B cell (primary cell): ENCODE measurements at regions of chr21 and their contacts with region 1.

Region 1: DNA sequence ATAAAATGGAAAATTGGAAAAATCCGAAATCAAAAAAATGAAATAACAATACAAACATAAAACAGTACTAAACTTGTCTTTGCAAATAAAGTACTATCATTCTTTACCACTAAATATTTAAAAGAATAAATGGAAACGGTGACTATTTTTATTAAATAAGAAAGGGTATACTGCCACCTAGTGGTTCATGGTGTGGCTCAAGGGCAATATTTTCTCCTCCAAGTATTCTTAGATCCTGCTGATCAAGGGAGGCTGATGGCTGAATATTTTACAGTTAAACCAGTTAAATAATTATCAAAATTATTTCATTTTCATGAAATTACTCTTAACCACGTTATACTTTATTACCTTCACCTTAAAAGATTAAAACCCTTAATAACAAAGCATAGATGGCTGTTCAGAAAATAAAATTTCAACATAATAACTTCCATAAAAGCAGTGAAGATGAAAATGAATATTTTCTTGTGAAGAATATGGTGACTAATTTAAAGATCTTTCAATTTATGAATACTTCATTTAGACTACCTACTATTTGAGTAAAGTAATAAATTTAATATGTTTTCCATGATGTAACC is 1793.9 kb downstream of the NCAM2 start:
- DNase-seq: peak; percentile 40
- ATAC-seq: no peak
- H3K4me3 ChIP-seq: no peak overlapping the region
- H3K4me3 Mint-ChIP-seq: no peak overlapping the region
- H3K27ac ChIP-seq: no peak overlapping the region
- H3K27ac Mint-ChIP-seq: no peak overlapping the region
- H3K4me1 ChIP-seq: no peaks in the 10 kb centered on the region
- H3K4me1 Mint-ChIP-seq: no peaks in the 10 kb centered on the region
- H3K27me3 ChIP-seq: no peaks in the 10 kb centered on the region
- H3K27me3 Mint-ChIP-seq: no peaks in the 10 kb centered on the region
- CTCF ChIP-seq: peak; percentile 93

Region 2: DNA sequence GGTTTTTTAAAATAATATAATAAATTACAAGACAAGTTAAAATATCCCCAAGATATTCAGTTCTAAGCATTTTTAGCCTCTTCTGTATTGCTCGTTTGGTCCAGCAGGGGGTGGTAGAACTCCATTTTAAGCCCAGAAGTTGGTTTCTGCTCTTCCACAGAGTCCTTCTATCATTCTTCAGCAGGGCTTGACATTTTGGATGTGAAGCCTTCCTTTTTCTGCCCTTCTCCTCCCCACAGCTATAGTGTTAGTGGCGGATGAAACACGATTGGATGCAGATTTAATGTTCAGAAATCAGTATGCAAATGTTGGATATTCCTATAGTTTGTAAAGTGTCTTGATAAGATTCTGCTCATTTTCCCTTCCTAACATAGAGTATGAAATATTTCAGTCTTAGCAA is 1792.4 kb before region 1 on chr21:
- CTCF ChIA-PET with region 1: interaction called, 3 read pairs
- POLR2A ChIA-PET with region 1: no interaction called
- intact Hi-C with region 1: loop called (anchors 5 kb)
- DNase-seq: peak; percentile 31
- ATAC-seq: no peak
- H3K4me3 ChIP-seq: no peak overlapping the region
- H3K4me3 Mint-ChIP-seq: no peak overlapping the region
- H3K27ac ChIP-seq: no peak overlapping the region
- H3K27ac Mint-ChIP-seq: no peak overlapping the region
- H3K4me1 ChIP-seq: peaks cover 16 to 19% of the 10 kb centered on the region in 2 donors
- H3K4me1 Mint-ChIP-seq: peaks cover 19% of the 10 kb centered on the region
- H3K27me3 ChIP-seq: peaks cover 0 to 26% (median 19%) of the 10 kb centered on the region in 4 experiments
- H3K27me3 Mint-ChIP-seq: peaks cover 32% of the 10 kb centered on the region
- CTCF ChIP-seq: peak; percentile 74

Region 3: DNA sequence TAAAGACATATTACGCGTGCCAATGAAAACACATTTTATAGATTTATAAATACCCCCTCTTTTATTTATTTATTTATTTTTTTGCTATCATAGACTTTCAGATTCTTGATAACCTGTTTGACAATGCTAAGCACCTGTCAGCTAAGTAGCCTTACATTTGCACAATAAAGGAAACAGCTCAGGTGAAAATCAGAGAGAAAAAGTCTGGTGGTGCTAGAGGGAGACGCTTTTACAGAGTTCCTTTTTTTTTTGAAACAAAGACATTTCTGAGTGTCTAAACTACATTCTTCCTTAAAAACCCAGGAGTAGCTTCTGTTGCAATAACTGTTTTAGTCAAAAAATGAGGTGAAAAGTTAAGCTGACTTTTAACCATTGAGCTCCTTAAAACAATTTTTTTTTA is 182.3 kb before region 1 on chr21:
- CTCF ChIA-PET with region 1: no interaction called
- POLR2A ChIA-PET with region 1: no interaction called
- intact Hi-C with region 1: no loop called
- DNase-seq: no peak
- ATAC-seq: no peak
- H3K4me3 ChIP-seq: no peak overlapping the region
- H3K4me3 Mint-ChIP-seq: no peak overlapping the region
- H3K27ac ChIP-seq: no peak overlapping the region
- H3K27ac Mint-ChIP-seq: no peak overlapping the region
- H3K4me1 ChIP-seq: no peaks in the 10 kb centered on the region
- H3K4me1 Mint-ChIP-seq: no peaks in the 10 kb centered on the region
- H3K27me3 ChIP-seq: no peaks in the 10 kb centered on the region
- H3K27me3 Mint-ChIP-seq: no peaks in the 10 kb centered on the region
- CTCF ChIP-seq: no peak

Region 4: DNA sequence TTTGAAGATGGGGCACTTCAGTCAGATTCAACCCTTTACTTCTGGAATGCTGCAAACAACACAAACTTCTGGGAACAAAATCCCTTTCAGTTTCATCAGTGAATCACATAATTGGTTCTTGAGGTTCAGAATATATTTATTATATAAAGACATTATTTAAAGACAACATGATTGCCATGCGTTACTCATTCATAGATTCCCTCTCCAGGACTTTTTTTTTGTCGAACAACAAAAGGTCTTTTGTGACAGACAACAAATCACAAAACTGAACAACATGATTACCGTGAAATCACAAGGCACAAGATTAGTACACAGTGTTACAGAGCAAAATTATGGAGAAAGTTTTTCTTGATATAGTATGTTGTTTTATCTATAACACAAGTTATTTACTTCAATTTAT is 21.1 kb after region 1 on chr21:
- CTCF ChIA-PET with region 1: no interaction called
- POLR2A ChIA-PET with region 1: no interaction called
- intact Hi-C with region 1: no loop called
- DNase-seq: no peak
- ATAC-seq: no peak
- H3K4me3 ChIP-seq: no peak overlapping the region
- H3K4me3 Mint-ChIP-seq: no peak overlapping the region
- H3K27ac ChIP-seq: no peak overlapping the region
- H3K27ac Mint-ChIP-seq: no peak overlapping the region
- H3K4me1 ChIP-seq: no peaks in the 10 kb centered on the region
- H3K4me1 Mint-ChIP-seq: no peaks in the 10 kb centered on the region
- H3K27me3 ChIP-seq: no peaks in the 10 kb centered on the region
- H3K27me3 Mint-ChIP-seq: no peaks in the 10 kb centered on the region
- CTCF ChIP-seq: no peak